ENCODE measurements at regions of chr17 and their contacts with region 1.

Region 1: DNA sequence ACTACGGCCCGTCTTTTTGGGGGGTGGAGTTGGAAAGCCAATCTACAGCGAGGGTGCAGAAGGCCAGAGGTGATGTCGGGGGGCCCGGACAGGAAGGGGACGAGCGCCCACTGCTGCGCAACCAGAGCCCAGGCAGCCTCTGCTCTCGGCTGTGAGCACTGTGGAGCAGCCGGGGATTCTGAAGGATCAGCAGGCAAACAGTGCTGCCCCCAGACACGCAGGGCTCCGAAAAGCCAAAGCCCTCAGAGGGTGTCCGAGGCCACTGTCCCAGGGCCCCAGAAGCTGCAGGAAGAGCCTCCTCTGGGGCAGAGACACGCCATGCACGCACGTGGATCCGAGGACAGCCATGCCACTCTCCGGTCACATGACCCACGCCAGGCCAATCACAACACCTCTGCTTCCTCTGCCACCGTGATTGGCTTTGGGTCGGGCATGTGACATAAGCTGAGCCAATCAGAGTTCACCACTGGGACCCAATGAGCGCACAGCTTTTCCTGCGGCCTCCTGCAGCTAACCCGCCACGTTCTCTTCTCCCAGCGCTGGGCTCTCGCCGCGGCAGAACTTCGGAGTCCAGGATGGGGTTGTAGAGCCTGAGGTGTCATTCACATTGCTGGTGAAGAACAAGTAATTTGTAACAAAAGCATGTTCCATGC is 40.7 kb downstream of the ACTG1 start:
- DNase-seq: peak; percentile 98

Region 2: DNA sequence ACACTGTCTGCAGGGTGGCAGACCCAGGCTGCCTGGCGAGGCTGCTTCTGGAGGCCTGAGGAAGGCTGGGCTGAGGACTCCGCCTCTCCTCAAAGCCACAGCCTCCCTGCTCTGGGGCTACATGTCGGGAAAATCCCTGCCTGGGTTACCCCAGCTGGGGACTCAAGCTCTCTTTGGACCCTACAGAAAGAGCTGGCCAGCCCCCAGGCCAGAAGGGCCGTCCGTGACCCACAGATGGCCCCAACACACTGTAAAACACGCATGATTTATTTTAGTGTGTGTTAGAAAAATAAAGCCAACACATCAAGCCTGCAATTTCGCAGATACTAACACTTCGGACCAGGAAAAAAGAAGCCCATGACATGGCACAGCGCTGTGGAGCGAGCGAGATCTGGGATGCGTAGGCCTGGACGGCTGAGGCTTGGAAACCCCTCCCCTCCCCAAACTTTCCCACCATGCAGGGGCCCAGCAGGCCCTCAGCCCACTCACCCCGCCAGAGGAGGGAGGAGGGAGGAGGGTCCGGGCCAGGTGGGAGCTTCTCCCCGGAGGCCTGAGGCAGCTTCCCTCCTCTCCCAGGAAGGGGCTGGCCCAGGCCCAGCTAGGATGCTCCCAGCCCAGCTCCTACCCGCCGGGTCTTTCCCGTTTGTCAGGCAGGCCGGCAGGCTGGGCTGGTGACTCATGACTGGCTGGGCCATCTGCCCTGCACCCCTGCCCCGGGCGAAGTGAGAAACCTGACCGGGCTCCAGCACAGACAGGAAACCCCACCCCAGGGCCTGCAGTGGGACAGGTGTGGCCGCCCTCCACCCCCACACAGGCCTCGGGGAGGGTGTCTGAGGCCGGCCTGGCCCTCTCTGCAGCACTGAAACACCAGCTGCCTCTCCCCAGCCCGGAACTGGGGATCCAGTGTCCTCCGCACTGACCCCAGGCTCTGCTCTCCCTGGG is 142.7 kb before region 1 on chr17:
- CTCF ChIA-PET with region 1: no interaction called
- POLR2A ChIA-PET with region 1: no interaction called
- DNase-seq: peak; percentile 57

Region 3: DNA sequence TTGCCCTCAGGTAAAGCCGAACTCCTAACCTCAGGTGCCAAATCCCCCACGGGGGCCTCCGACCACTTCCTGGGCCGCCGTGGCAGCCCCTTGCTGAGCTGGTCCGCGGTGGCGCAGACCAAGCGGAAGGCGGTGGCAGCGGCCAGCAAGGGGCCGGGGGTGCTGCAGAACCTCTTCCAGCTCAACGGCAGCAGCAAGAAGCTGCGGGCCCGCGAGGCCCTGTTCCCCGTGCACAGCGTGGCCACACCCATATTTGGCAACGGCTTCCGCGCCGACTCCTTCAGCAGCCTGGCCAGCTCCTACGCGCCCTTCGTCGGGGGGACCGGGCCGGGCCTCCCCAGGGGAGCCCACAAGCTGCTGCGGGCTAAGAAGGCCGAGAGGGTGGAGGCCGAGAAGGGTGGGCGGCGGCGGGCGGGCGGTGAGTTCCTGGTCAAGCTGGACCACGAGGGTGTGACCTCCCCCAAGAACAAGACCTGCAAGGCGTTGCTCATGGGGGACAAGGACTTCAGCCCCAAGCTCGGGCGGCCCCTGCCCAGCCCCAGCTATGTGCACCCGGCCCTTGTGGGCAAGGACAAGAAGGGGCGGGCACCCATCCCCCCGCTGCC is 11.0 kb before region 1 on chr17:
- CTCF ChIA-PET with region 1: no interaction called
- POLR2A ChIA-PET with region 1: interaction called, 10 read pairs
- DNase-seq: no peak

Measured in HEK293T (cell line).